Activated naive CD4-positive, alpha-beta T cell treated with anti-CD3 and anti-CD28 coated beads for 36 hours (primary cell): ENCODE measurements at regions of chr14 and their contacts with region 1.

Region 1: DNA sequence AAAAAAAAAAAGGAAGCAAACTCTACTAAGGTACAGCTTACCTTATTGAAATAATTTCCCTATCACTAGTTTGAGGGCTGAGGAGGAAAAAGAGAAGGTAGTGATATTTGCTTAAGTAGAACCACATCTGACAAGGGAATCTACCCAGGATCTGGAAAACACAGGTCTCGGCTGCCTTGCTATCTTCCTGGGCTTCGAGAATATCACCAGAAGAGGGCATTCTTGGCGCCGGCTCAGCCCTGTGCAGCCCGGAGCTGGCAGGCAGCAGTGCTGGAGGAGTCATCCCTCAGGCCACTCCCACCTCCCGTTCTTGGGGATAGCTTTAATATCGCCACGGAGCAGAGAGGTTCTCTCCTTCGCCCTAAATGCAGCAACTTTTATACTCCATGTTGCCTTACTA is 1181.2 kb downstream of the VRK1 start:
- DNase-seq: peak; percentile 96
- H3K4me3 Mint-ChIP-seq: peak overlapping the region; percentile 82
- H3K27ac Mint-ChIP-seq: peak overlapping the region; percentile 96
- H3K4me1 Mint-ChIP-seq: peaks cover 56% of the 10 kb centered on the region
- H3K27me3 Mint-ChIP-seq: no peaks in the 10 kb centered on the region

Region 2: GRCh38 chr14:97177015-97177414 is 801.3 kb before region 1 on chr14:
- CTCF ChIA-PET with region 1: no interaction called
- intact Hi-C with region 1: loop called (anchors 2 kb)
- DNase-seq: peak; percentile 59
- H3K4me3 Mint-ChIP-seq: no peak overlapping the region
- H3K27ac Mint-ChIP-seq: no peak overlapping the region
- H3K4me1 Mint-ChIP-seq: peaks cover 37% of the 10 kb centered on the region
- H3K27me3 Mint-ChIP-seq: no peaks in the 10 kb centered on the region

Region 3: DNA sequence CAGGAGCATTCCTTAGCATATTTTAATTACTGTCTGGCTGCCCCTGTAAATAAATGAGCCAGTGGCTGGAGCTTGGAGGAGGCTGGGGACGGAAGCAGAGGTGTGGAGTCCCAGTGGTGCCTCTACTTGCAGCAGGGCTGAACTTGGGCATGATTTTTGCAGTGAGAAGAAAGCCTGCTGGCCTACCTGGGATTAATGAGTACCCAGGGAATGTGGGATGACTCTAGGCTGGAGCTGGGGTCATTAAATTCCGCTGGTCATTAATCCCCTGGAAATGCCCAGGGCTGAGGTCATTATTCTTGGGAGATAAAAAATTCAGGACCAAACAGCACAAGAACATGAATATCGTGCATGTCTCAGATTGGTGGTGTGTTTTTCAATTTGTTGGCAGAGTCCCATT is 427.9 kb before region 1 on chr14:
- CTCF ChIA-PET with region 1: no interaction called
- intact Hi-C with region 1: no loop called
- DNase-seq: no peak
- H3K4me3 Mint-ChIP-seq: no peak overlapping the region
- H3K27ac Mint-ChIP-seq: no peak overlapping the region
- H3K4me1 Mint-ChIP-seq: no peaks in the 10 kb centered on the region
- H3K27me3 Mint-ChIP-seq: no peaks in the 10 kb centered on the region

Region 4: DNA sequence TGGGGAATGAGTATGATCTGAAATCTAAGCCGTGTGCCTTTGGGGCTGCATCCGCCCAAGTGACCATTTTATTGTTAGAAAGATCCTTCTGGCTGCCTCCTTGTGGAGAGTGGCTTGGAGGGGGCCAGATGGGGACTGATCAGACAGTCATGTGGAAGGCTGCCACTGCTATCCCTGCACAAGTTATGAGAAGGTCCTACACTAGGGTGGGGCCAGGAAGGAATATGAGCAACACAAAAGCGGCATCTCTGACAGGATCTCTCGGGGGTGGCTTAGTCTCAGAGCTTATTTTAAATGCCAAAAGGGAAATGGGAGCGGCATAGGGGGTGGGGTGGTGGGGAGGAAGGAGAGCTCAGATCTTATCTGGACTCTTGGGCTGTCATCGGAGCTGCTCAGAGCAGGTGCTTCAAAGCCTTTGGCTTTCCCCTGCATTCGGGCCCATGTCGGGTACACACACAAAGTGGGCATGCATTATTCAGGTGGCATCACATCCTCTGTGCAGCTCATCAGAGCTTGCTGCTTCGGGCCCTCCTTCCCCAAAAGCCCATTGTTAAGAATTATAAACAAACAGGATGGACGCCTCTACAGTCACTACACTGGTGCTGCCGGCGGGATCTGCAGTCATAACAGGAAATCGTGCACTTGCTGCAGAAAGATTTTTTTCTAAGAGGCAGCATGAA is 375.8 kb before region 1 on chr14:
- CTCF ChIA-PET with region 1: interaction called, 3 read pairs
- intact Hi-C with region 1: loop called (anchors 10 kb)
- DNase-seq: peak; percentile 80
- H3K4me3 Mint-ChIP-seq: no peak overlapping the region
- H3K27ac Mint-ChIP-seq: no peak overlapping the region
- H3K4me1 Mint-ChIP-seq: peaks cover 30% of the 10 kb centered on the region
- H3K27me3 Mint-ChIP-seq: no peaks in the 10 kb centered on the region

Region 5: GRCh38 chr14:97866663-97867062 is 111.7 kb before region 1 on chr14:
- CTCF ChIA-PET with region 1: no interaction called
- intact Hi-C with region 1: loop called (anchors 5 kb)
- DNase-seq: peak; percentile 25
- H3K4me3 Mint-ChIP-seq: no peak overlapping the region
- H3K27ac Mint-ChIP-seq: peak overlapping the region; percentile 61
- H3K4me1 Mint-ChIP-seq: peaks cover 15% of the 10 kb centered on the region
- H3K27me3 Mint-ChIP-seq: no peaks in the 10 kb centered on the region

Region 6: DNA sequence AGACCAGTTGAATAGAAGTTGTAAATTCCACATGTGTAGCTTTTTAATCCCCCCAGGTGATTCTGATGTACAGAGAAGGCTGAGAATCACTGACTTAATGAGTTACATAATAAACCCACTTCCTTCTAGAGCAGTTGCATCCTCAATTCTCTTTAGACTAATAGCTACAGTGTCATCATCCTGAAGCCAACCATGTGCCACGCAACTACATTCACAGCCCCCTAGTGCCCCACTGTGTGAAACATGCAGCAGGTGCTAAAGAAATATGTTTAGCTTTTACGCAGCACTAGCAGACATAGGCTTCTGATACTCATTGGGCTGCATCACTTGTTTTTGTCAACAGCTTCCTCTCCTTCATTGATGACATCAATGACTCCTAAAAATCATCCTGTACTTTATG is 125.4 kb after region 1 on chr14:
- CTCF ChIA-PET with region 1: interaction called, 6 read pairs
- intact Hi-C with region 1: loop called (anchors 1 kb)
- DNase-seq: peak; percentile 61
- H3K4me3 Mint-ChIP-seq: no peak overlapping the region
- H3K27ac Mint-ChIP-seq: no peak overlapping the region
- H3K4me1 Mint-ChIP-seq: peaks cover 49% of the 10 kb centered on the region
- H3K27me3 Mint-ChIP-seq: no peaks in the 10 kb centered on the region

Region 7: GRCh38 chr14:98218218-98218617 is 239.9 kb after region 1 on chr14:
- CTCF ChIA-PET with region 1: interaction called, 3 read pairs
- intact Hi-C with region 1: loop called (anchors 5 kb)
- DNase-seq: no peak
- H3K4me3 Mint-ChIP-seq: no peak overlapping the region
- H3K27ac Mint-ChIP-seq: no peak overlapping the region
- H3K4me1 Mint-ChIP-seq: peaks cover 50% of the 10 kb centered on the region
- H3K27me3 Mint-ChIP-seq: no peaks in the 10 kb centered on the region